ENCODE measurements at regions of chr3 and their contacts with region 1.

Region 1: DNA sequence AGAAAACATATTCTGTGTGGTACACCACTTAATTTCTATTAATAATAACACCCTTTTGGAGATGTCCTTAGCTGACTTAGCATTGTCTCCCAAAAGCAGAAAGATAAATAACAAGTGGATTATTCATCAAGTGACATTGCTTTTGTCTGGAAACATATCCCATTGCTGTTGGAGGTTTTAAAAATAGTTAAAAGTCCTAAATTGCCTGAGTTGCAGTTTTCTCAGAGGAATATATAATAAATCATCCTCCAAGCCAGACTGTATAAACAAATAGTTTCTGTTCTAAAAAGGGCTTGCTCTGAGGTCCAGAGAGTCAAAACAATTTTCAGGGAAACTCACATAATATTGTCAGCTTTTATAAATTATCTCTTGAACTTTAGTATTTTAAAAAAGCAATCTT is 60.4 kb upstream of the CD96 start:
- DNase-seq: no peak
- ATAC-seq: no peak
- H3K4me3 ChIP-seq: no peak overlapping the region
- H3K27ac ChIP-seq: no peak overlapping the region
- H3K4me1 ChIP-seq: no peaks in the 10 kb centered on the region
- H3K27me3 ChIP-seq: no peaks in the 10 kb centered on the region
- CTCF ChIP-seq: no peak
- EP300 ChIP-seq: no peak
- POLR2A ChIP-seq: no peak
- RAD21 ChIP-seq: no peak

Region 2: DNA sequence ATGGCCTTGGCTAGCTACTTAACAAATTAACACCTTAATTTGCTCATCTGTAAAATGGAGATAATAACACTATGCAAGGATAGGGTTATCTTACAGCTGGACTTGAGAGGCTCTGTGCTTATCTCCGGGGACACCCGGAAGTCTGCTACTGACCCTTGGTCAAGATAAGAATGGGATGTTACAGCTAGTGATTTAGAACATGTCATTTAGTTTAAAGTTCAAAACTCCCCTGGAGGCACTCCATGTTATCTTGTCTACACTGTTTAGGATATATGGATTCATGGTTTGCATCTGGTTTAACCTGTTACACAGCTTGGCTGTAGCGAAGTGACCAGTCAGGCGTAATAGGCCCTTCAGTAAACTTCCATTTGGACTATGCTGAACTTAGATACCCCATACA is 95.5 kb before region 1 on chr3:
- CTCF ChIA-PET with region 1: no interaction called
- POLR2A ChIA-PET with region 1: no interaction called
- RAD21 ChIA-PET with region 1: no interaction called
- SMC1A ChIA-PET with region 1: no interaction called
- in situ Hi-C with region 1: no loop called
- intact Hi-C with region 1: no loop called
- DNase-seq: no peak
- ATAC-seq: no peak
- H3K4me3 ChIP-seq: no peak overlapping the region
- H3K27ac ChIP-seq: no peak overlapping the region
- H3K4me1 ChIP-seq: no peaks in the 10 kb centered on the region
- H3K27me3 ChIP-seq: no peaks in the 10 kb centered on the region
- CTCF ChIP-seq: no peak
- EP300 ChIP-seq: no peak
- POLR2A ChIP-seq: no peak
- RAD21 ChIP-seq: no peak

Region 3: GRCh38 chr3:111428301-111428700 is 53.2 kb before region 1 on chr3:
- CTCF ChIA-PET with region 1: no interaction called
- POLR2A ChIA-PET with region 1: no interaction called
- RAD21 ChIA-PET with region 1: no interaction called
- SMC1A ChIA-PET with region 1: no interaction called
- in situ Hi-C with region 1: no loop called
- intact Hi-C with region 1: loop called (anchors 10 kb)
- DNase-seq: no peak
- ATAC-seq: no peak
- H3K4me3 ChIP-seq: no peak overlapping the region
- H3K27ac ChIP-seq: no peak overlapping the region
- H3K4me1 ChIP-seq: no peaks in the 10 kb centered on the region
- H3K27me3 ChIP-seq: no peaks in the 10 kb centered on the region
- CTCF ChIP-seq: no peak
- EP300 ChIP-seq: no peak
- POLR2A ChIP-seq: no peak
- RAD21 ChIP-seq: no peak

Region 4: GRCh38 chr3:111506435-111506834 is 24.9 kb after region 1 on chr3:
- CTCF ChIA-PET with region 1: no interaction called
- POLR2A ChIA-PET with region 1: no interaction called
- RAD21 ChIA-PET with region 1: no interaction called
- SMC1A ChIA-PET with region 1: no interaction called
- in situ Hi-C with region 1: no loop called
- intact Hi-C with region 1: no loop called
- DNase-seq: no peak
- ATAC-seq: peak; percentile 71
- H3K4me3 ChIP-seq: no peak overlapping the region
- H3K27ac ChIP-seq: no peak overlapping the region
- H3K4me1 ChIP-seq: no peaks in the 10 kb centered on the region
- H3K27me3 ChIP-seq: no peaks in the 10 kb centered on the region
- CTCF ChIP-seq: no peak
- EP300 ChIP-seq: no peak
- POLR2A ChIP-seq: no peak
- RAD21 ChIP-seq: no peak